ENCODE measurements at regions of chr1 and their contacts with region 1.

Region 1: DNA sequence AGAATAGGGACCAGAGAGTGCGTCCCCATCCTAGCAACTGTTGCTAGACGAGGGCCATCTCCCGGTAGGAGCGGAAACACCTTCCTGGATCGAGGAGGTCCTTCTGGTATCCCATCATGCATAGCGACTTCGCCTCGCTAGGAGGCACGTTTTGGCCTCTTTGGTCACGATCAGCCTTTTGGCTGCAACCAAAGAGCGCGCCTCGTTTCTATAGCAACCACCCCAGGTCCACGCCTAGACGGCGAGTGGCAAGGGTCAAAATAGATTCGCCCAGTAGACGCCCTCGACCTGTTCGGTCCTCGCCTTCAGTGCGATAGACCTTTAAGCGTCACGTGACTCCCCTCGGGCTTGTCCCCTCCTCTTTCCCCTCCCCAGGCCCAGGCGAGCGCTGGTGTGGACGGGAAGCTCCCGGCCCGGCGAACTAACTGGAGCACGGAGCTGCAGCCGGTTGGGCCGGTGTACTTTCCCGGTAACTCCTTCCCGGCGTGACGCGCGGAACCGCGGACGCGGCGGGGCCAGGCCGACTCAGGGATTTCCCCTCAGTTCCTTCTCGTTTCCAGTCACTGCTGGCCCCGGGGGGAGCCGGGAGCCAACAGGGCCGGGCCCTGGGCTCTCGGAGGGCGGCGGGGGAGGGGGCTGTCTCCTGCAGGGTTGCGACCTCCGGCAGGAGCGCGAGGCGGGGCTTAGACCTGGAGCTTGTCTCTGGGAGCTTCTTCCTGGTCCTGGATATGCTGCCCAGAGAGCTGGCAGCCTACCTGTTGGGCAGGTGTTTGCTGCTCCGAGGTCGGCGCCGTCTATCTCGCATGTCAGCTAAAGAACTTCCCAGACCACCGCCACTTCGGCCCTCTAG is at the start of gene DNAJC16:
- DNase-seq: peak; percentile 75 to 98 (median 96)
- ATAC-seq: peak; percentile 50
- H3K4me3 ChIP-seq: peak within 1 kb of the TSS; percentile 78
- H3K4me3 Mint-ChIP-seq: peak within 1 kb of the TSS; percentile 82 to 100 (median 91)
- H3K27ac ChIP-seq: peak within 1 kb of the TSS; percentile 100
- H3K27ac Mint-ChIP-seq: peak within 1 kb of the TSS; percentile 90 to 100 (median 100)
- H3K4me1 ChIP-seq: peaks cover 21 to 28% of the 10 kb centered on the region in 2 donors
- H3K4me1 Mint-ChIP-seq: peaks cover 33 to 71% (median 60%) of the 10 kb centered on the region in 7 donors
- H3K27me3 ChIP-seq: no peaks in the 10 kb centered on the region
- H3K27me3 Mint-ChIP-seq: no peaks in the 10 kb centered on the region
- total RNA-seq, gene DNAJC16: 17.8 to 29.4 (median 25.0) TPM

Region 2: DNA sequence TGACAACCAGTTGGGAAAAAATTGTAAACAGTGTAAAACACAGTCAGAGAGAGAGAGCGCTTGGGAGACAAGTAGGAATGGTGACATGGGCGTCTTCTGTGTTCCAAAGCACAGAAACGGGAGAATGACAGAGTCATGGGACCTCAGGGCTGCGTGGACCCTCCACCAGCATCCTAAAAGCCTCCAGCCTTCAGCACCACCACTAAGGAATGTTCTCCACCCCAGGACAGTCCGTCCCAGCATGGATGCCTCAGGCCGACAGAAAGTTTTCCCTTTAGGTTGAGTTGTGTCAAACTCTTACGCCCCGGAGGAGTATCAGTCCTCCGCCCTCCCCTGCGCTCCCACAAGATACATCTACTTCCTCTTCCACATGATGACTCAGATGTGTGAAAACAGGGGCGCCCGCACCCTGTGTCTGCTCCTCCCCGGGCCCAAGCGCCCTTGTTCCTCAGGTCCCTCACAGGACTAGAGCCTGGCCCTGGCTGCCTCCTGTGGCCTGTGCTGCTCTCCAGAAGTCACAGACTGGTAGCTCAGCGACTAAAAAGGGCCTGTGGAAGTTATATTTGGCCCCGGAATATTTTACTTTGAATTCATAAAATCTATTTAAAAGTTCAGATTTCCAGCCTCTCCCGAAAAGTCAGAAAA is 180.9 kb before region 1 on chr1:
- CTCF ChIA-PET with region 1: no interaction called
- POLR2A ChIA-PET with region 1: no interaction called
- intact Hi-C with region 1: loop called in 1 of 2 experiments (anchors 10 kb)
- DNase-seq: peak in 2 of 9 donors; percentile 31 to 68
- ATAC-seq: peak; percentile 95
- H3K4me3 ChIP-seq: peak overlapping the region; percentile 25
- H3K4me3 Mint-ChIP-seq: peak overlapping the region in 1 of 10 donors; percentile 71
- H3K27ac ChIP-seq: no peak overlapping the region
- H3K27ac Mint-ChIP-seq: peak overlapping the region in 3 of 9 donors; percentile 41 to 84 (median 60)
- H3K4me1 ChIP-seq: peaks cover 0 to 60% of the 10 kb centered on the region in 2 donors
- H3K4me1 Mint-ChIP-seq: peaks cover 0 to 76% (median 8%) of the 10 kb centered on the region in 7 donors
- H3K27me3 ChIP-seq: no peaks in the 10 kb centered on the region
- H3K27me3 Mint-ChIP-seq: peaks cover 9 to 52% (median 35%) of the 10 kb centered on the region in 5 donors

Region 3: GRCh38 chr1:15603050-15603965 is 76.6 kb after region 1 on chr1:
- CTCF ChIA-PET with region 1: no interaction called
- POLR2A ChIA-PET with region 1: interaction called, 3 read pairs
- intact Hi-C with region 1: loop called in 1 of 2 experiments (anchors 1 kb)
- DNase-seq: peak; percentile 80 to 95 (median 90)
- ATAC-seq: peak; percentile 99
- H3K4me3 ChIP-seq: peak overlapping the region; percentile 88
- H3K4me3 Mint-ChIP-seq: peak overlapping the region; percentile 73 to 95 (median 82)
- H3K27ac ChIP-seq: peak overlapping the region; percentile 68
- H3K27ac Mint-ChIP-seq: peak overlapping the region; percentile 57 to 94 (median 81)
- H3K4me1 ChIP-seq: peaks cover 9 to 11% of the 10 kb centered on the region in 2 donors
- H3K4me1 Mint-ChIP-seq: peaks cover 0 to 14% (median 12%) of the 10 kb centered on the region in 7 donors
- H3K27me3 ChIP-seq: no peaks in the 10 kb centered on the region
- H3K27me3 Mint-ChIP-seq: peaks cover 0 to 13% (median 0%) of the 10 kb centered on the region in 5 donors

Region 4: DNA sequence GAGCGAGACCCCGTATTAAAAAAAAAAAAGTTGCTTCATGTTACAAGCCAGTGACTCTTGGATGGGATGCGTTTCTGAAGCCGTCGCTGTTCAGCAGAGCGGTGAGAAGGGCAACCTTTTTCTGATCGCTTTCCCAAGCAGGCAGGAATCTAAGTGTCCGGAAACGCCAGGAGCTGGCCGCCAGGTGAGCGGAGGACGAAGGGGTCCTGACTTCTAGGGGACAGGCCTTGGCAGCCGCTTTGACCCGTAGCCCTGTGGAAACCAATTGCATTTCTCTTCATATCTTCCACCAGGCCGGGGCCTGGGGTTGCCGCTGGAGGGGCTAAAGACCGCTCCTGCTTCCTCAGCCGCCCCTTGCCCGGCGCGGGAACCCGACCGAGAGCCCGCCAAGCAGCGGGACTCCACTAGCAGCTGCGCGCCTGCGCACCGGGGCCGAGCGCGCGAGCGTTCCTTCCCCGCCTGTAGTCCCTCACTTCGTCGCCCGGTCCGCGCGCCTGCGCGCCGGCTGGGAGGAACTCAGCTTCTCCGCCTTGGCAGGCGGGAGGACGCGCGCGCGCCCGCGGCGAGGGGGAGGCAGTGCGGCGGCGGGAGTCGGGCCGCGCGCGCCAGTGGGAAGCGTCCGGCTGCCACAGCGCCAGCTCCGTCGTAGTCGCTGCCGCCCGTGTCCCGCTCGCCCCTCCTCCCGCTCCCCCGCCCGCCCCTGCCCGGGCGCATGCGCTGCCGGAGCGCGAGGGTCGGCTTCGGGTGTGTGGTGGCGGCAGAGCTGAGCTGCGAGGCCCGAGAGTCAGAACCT is 320.6 kb after region 1 on chr1 and contains the start of gene SPEN:
- CTCF ChIA-PET with region 1: no interaction called
- POLR2A ChIA-PET with region 1: no interaction called
- intact Hi-C with region 1: loop called in 1 of 2 experiments (anchors 1 kb)
- DNase-seq: peak; percentile 97 to 99 (median 99)
- ATAC-seq: peak; percentile 91
- H3K4me3 ChIP-seq: peak within 1 kb of the TSS; percentile 74
- H3K4me3 Mint-ChIP-seq: peak within 1 kb of the TSS; percentile 93 to 99 (median 98)
- H3K27ac ChIP-seq: peak within 1 kb of the TSS; percentile 90
- H3K27ac Mint-ChIP-seq: peak within 1 kb of the TSS; percentile 93 to 98 (median 97)
- H3K4me1 ChIP-seq: peaks cover 20 to 26% of the 10 kb centered on the region in 2 donors
- H3K4me1 Mint-ChIP-seq: peaks cover 21 to 64% (median 44%) of the 10 kb centered on the region in 7 donors
- H3K27me3 ChIP-seq: no peaks in the 10 kb centered on the region
- H3K27me3 Mint-ChIP-seq: no peaks in the 10 kb centered on the region
- total RNA-seq, gene SPEN: 72.1 to 92.1 (median 82.9) TPM

Region 5: DNA sequence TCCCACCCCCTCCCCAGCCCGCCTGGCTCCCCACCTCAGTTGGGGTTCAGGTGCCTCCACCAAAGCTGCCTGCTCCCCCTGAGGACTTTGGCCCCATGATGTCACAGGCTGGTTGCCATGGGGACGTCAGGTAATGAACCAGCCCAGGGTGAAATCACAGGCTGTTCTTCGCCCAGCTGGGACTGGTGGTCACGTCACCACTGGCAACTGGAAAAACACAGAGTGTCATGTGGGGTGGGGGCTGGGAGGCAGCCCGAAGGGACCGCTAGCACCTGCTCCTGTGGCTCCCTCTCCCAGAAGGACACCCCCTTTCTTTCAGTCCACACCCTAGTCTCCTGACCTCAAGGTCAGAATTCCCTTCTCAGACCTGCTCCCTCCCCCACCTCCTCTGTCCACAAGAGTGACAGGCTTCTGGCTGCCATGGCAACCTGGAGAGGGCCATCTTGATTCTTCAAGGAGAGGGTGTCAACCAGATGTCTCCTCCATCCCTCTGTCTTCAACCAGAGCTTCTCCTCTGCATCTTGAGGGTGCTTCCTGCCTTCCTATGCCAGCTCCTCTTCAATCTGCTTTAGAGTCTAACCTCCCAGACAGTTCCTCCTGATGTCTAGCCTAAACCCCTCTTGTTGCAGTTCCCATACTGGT is 540.5 kb after region 1 on chr1:
- CTCF ChIA-PET with region 1: no interaction called
- POLR2A ChIA-PET with region 1: no interaction called
- intact Hi-C with region 1: no loop called
- DNase-seq: no peak
- ATAC-seq: peak; percentile 12
- H3K4me3 ChIP-seq: no peak overlapping the region
- H3K4me3 Mint-ChIP-seq: peak overlapping the region in 1 of 10 donors; percentile 12
- H3K27ac ChIP-seq: no peak overlapping the region
- H3K27ac Mint-ChIP-seq: peak overlapping the region in 1 of 9 donors; percentile 43
- H3K4me1 ChIP-seq: peaks cover 0 to 17% of the 10 kb centered on the region in 2 donors
- H3K4me1 Mint-ChIP-seq: peaks cover 11 to 50% (median 13%) of the 10 kb centered on the region in 7 donors
- H3K27me3 ChIP-seq: no peaks in the 10 kb centered on the region
- H3K27me3 Mint-ChIP-seq: peaks cover 0 to 40% (median 8%) of the 10 kb centered on the region in 5 donors

Region 6: DNA sequence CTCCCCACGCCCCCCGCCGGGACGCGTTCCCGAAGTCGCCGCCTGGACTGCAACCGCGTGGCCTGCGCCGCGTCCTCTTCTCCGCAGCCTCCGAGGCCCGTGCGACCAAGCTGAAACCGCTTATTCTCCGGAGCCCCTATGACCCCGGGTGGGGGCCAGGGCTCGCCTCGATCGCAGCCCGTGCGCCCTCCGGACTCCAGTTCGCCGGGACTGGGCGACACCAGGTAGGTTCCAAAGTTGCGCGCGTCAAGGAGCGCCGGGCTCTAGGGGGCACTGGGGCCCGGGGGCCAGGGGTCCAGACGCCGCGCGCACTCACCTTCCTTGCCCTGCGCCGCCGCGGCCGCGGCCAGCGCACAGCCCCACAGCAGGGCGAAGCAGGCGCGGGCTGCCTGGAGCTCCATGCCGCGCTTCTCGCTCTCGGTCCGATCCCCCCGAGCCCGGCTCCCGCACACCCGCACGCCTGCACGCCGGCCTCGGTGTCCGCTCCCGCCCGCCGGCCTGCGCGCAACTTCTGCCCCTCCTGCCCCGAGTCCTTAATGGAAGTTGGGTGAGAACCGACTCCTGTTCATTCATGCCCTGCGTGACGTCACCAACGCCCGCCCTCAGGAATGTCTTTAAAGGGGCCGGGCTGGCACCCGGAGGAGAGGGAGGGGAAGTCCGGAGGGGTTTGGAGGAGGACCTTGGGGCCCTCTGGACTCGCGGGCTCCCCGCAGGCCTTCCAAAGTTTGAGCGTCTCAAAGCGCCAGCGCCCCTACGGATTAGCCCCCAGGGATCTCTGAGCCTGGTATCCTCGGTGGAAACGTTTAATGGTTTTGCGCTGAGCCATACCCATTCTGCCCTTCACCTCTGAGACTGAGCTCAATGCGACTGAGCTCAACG is 629.1 kb after region 1 on chr1 and contains the start of gene EPHA2:
- CTCF ChIA-PET with region 1: no interaction called
- POLR2A ChIA-PET with region 1: no interaction called
- intact Hi-C with region 1: no loop called
- DNase-seq: no peak
- ATAC-seq: peak; percentile 20
- H3K4me3 ChIP-seq: peak within 1 kb of the TSS; percentile 51
- H3K4me3 Mint-ChIP-seq: peak within 1 kb of the TSS; percentile 33 to 86 (median 73)
- H3K27ac ChIP-seq: no peak within 1 kb of the TSS
- H3K27ac Mint-ChIP-seq: peak within 1 kb of the TSS in 6 of 9 donors; percentile 46 to 93 (median 70)
- H3K4me1 ChIP-seq: peaks cover 24 to 38% of the 10 kb centered on the region in 2 donors
- H3K4me1 Mint-ChIP-seq: peaks cover 27 to 80% (median 55%) of the 10 kb centered on the region in 7 donors
- H3K27me3 ChIP-seq: no peaks in the 10 kb centered on the region
- H3K27me3 Mint-ChIP-seq: peaks cover 0 to 61% (median 3%) of the 10 kb centered on the region in 5 donors
- total RNA-seq, gene EPHA2: 0.59 to 0.61 TPM in 2 of 5 experiments, not detected in the others

Region 7: GRCh38 chr1:16351994-16352841 is 825.5 kb after region 1 on chr1 and contains the start of gene FBXO42:
- CTCF ChIA-PET with region 1: no interaction called
- POLR2A ChIA-PET with region 1: interaction called, 3 read pairs
- intact Hi-C with region 1: loop called in 1 of 2 experiments (anchors 5 kb)
- DNase-seq: peak; percentile 88 to 96 (median 94)
- ATAC-seq: peak; percentile 95
- H3K4me3 ChIP-seq: peak within 1 kb of the TSS; percentile 71
- H3K4me3 Mint-ChIP-seq: peak within 1 kb of the TSS; percentile 84 to 98 (median 94)
- H3K27ac ChIP-seq: peak within 1 kb of the TSS; percentile 97
- H3K27ac Mint-ChIP-seq: peak within 1 kb of the TSS; percentile 69 to 98 (median 94)
- H3K4me1 ChIP-seq: peaks cover 10 to 24% of the 10 kb centered on the region in 2 donors
- H3K4me1 Mint-ChIP-seq: peaks cover 17 to 44% (median 34%) of the 10 kb centered on the region in 7 donors
- H3K27me3 ChIP-seq: no peaks in the 10 kb centered on the region
- H3K27me3 Mint-ChIP-seq: no peaks in the 10 kb centered on the region
- total RNA-seq, gene FBXO42: 18.7 to 25.7 (median 24.6) TPM

Region 8: GRCh38 chr1:16904560-16905111 is 1377.9 kb after region 1 on chr1:
- CTCF ChIA-PET with region 1: no interaction called
- POLR2A ChIA-PET with region 1: no interaction called
- intact Hi-C with region 1: loop called in 1 of 2 experiments (anchors 10 kb)
- DNase-seq: peak; percentile 97 to 100 (median 99)
- ATAC-seq: peak; percentile 95
- H3K4me3 ChIP-seq: peak overlapping the region; percentile 69
- H3K4me3 Mint-ChIP-seq: no peak overlapping the region
- H3K27ac ChIP-seq: peak overlapping the region; percentile 98
- H3K27ac Mint-ChIP-seq: no peak overlapping the region
- H3K4me1 ChIP-seq: peaks cover 11 to 25% of the 10 kb centered on the region in 2 donors
- H3K4me1 Mint-ChIP-seq: peaks cover 26 to 51% (median 38%) of the 10 kb centered on the region in 7 donors
- H3K27me3 ChIP-seq: no peaks in the 10 kb centered on the region
- H3K27me3 Mint-ChIP-seq: peaks cover 0 to 4% (median 0%) of the 10 kb centered on the region in 5 donors